Caco-2 (cell line): ENCODE measurements at regions of chr20 and their contacts with region 1.

Region 1: DNA sequence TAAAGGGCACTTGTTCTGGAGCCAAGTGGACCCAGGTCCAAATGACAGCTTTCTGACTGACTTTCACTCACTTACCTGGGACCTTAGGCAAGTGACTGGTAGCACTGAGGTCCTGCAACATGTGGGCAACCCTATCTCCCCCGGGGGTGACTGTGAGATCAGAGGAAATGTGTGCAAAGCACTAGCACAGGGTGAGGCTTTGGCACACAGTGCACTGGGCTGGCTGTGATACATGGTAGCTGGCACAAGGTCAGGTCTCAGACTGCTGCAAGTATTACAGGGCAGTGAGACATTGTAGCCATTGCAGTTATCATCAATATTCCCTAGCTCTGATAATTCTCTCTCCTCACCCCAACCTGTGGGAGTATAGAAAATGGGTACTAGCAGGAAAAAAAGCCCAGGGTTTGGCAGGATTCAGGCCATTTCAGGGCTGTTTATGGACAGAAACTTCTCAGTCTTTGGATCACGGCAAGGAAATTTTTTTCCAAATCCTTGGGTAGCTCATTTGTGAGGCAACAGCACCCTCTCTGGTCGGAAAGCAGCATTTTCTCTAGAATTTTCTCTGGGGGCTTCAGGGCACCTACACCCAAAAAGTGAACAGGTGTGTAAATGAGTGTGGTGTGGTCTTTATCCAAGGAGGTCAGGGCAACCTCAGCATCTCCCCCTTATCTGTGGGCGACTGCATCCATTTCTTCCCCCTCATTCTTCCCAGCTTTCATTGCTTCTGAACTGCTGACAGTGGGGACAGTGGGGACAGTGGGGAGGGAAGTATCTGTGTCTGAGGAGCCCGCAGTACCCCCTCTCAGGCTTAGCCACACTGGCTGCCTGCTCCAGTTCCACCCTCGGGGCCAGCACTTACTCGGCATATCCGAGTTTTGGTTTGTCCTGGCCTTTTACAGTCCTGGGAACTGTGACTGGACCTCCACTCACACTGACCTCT is 148.7 kb upstream of the PHACTR3 start:
- DNase-seq: peak in 1 of 2 experiments; percentile 52
- H3K4me3 ChIP-seq: no peak overlapping the region
- H3K4me3 Mint-ChIP-seq: no peak overlapping the region
- H3K27ac Mint-ChIP-seq: no peak overlapping the region
- H3K4me1 ChIP-seq: peaks cover 10% of the 10 kb centered on the region; the same call in 1 of the 2 replicates
- H3K4me1 Mint-ChIP-seq: no peaks in the 10 kb centered on the region
- H3K27me3 ChIP-seq: no peaks in the 10 kb centered on the region
- H3K27me3 Mint-ChIP-seq: peaks cover 17% of the 10 kb centered on the region
- CTCF ChIP-seq: peak; percentile 86 to 91

Region 2: DNA sequence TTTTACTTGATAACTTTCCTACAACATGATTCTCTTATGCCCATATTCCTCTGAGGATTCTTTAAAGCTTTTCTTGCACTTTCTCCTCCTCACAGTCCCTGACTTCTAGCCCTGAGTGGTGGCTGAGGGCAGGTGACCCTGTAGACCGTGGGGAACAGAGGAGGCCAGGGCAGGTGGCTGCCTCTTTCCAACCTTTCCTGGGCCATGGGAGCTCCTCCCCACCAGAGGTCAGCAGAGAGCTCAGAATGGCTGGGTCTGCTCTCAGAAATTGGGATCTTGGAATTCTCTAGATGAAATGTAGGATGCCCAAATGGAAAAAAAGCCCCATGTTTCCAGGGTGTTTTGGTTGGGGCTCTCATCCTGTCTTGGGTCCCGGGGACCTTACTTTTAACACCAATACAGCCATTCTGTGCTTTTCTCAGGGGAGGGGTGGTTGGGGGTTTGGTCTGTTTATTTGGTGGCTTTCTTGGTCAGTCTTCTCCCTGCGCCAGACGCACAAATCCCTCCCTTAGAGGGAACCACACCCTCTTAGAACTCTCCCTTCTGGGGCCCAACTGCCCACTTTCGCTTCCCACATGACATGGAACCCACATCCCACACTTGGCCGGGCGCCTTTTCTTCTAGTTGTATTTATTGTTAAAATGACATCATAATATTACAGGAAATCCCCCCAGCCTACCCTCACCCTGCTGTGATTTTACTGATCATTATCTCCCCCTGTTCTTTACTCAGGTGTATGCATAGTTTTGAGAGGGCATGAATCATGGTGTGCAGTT is 585.2 kb before region 1 on chr20:
- CTCF ChIA-PET with region 1: interaction called, 29 read pairs
- POLR2A ChIA-PET with region 1: no interaction called
- intact Hi-C with region 1: loop called (anchors 1 kb)
- DNase-seq: peak; percentile 83 to 93
- H3K4me3 ChIP-seq: no peak overlapping the region
- H3K4me3 Mint-ChIP-seq: no peak overlapping the region
- H3K27ac Mint-ChIP-seq: no peak overlapping the region
- H3K4me1 ChIP-seq: no peaks in the 10 kb centered on the region
- H3K4me1 Mint-ChIP-seq: peaks cover 6% of the 10 kb centered on the region
- H3K27me3 ChIP-seq: no peaks in the 10 kb centered on the region
- H3K27me3 Mint-ChIP-seq: peaks cover 17% of the 10 kb centered on the region
- CTCF ChIP-seq: peak; percentile 98 to 100

Region 3: DNA sequence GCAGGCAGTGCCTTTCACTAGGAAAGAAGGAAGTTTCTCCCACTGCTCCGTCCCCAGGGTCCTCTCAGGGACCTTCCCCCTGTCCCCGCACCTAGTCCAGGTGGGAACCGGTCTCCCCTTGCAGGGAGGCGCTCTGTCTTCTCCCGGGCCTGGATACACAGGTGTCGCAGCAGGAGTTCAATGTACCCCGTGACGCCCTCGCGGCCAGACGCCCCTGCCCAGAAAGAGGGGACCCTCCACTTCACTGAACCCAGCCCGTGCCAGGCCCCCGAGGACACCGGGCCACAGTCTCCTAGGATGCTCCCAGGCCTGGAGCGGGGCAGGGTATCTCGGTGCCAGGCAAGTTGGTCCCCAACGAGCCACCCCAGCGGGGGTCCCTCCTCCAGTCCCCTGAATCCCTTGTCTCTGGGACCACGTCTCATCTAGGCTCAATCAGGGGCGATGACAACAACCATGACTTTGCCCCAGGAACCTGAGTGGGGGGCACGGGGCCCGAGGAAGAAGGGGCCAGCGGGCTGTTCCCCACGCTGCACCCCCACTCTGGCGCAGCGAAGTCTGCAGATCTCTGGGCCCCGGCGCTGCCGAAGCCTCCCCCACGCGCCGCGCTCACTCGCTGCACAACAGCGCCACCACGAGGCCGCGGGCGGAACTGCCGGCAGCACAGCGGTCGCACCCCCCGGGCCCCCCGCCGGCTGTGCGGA is 52.3 kb before region 1 on chr20:
- CTCF ChIA-PET with region 1: interaction called, 14 read pairs
- POLR2A ChIA-PET with region 1: no interaction called
- intact Hi-C with region 1: no loop called
- DNase-seq: peak in 1 of 2 experiments; percentile 92
- H3K4me3 ChIP-seq: no peak overlapping the region; the same call in 1 of the 2 replicates
- H3K4me3 Mint-ChIP-seq: peak overlapping the region; percentile 13
- H3K27ac Mint-ChIP-seq: no peak overlapping the region
- H3K4me1 ChIP-seq: peaks cover 20% of the 10 kb centered on the region
- H3K4me1 Mint-ChIP-seq: no peaks in the 10 kb centered on the region
- H3K27me3 ChIP-seq: no peaks in the 10 kb centered on the region; the same call in 1 of the 2 replicates
- H3K27me3 Mint-ChIP-seq: peaks cover 19% of the 10 kb centered on the region
- CTCF ChIP-seq: peak; percentile 99 to 100

Region 4: GRCh38 chr20:59439243-59439642 is 16.4 kb before region 1 on chr20:
- CTCF ChIA-PET with region 1: interaction called, 16 read pairs
- POLR2A ChIA-PET with region 1: no interaction called
- intact Hi-C with region 1: loop called (anchors 1 kb)
- DNase-seq: peak in 1 of 2 experiments; percentile 58
- H3K4me3 ChIP-seq: no peak overlapping the region
- H3K4me3 Mint-ChIP-seq: no peak overlapping the region
- H3K27ac Mint-ChIP-seq: no peak overlapping the region
- H3K4me1 ChIP-seq: peaks cover 7% of the 10 kb centered on the region; the same call in 1 of the 2 replicates
- H3K4me1 Mint-ChIP-seq: no peaks in the 10 kb centered on the region
- H3K27me3 ChIP-seq: peaks cover 2% of the 10 kb centered on the region; the same call in 1 of the 2 replicates
- H3K27me3 Mint-ChIP-seq: peaks cover 29% of the 10 kb centered on the region
- CTCF ChIP-seq: peak; percentile 41 to 69

Region 5: DNA sequence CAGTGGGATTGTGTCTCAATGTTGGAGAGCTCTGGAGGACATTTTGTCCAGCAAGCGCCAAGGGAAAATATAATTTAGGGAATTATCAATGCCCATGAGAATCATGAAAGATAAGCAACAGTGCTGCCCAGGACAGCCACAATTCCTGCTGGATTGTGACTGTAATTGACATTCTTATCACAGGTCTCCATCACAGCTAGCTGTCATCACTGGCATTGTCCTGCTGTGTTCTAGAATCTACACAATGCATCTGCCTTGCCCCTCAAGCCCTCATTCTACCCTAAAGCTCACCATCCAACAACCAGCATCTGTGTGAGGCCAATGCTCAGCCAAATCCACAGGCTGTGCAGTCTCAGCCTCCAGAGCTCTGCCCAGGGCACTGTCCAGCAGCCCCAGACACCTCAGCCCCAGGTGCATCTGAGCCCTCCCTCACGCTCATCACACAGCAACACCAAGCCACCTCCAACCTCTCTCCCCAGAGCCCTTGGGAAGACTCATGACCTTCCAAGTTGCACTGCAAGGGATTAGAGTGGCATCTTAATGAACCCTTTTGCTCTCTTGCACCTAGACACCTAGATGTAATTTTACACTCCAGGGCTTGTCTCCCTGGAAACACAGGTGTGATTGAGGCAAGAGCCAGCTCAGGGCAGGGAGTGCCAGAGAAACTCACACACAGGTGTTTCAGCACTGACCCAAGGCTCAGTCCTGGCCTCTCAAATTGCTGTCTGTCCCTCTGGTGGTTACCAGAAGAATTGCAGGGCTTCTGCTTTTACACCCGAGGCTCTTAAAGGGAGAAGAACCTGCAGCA is 63.4 kb after region 1 on chr20:
- CTCF ChIA-PET with region 1: no interaction called
- POLR2A ChIA-PET with region 1: no interaction called
- intact Hi-C with region 1: no loop called
- DNase-seq: peak; percentile 81
- H3K4me3 ChIP-seq: no peak overlapping the region
- H3K4me3 Mint-ChIP-seq: no peak overlapping the region
- H3K27ac Mint-ChIP-seq: no peak overlapping the region
- H3K4me1 ChIP-seq: no peaks in the 10 kb centered on the region
- H3K4me1 Mint-ChIP-seq: no peaks in the 10 kb centered on the region
- H3K27me3 ChIP-seq: no peaks in the 10 kb centered on the region; the same call in 1 of the 2 replicates
- H3K27me3 Mint-ChIP-seq: peaks cover 57% of the 10 kb centered on the region
- CTCF ChIP-seq: peak; percentile 98 to 99

Region 6: GRCh38 chr20:59966428-59966827 is 510.8 kb after region 1 on chr20:
- CTCF ChIA-PET with region 1: no interaction called
- POLR2A ChIA-PET with region 1: no interaction called
- intact Hi-C with region 1: no loop called
- DNase-seq: no peak
- H3K4me3 ChIP-seq: no peak overlapping the region
- H3K4me3 Mint-ChIP-seq: no peak overlapping the region
- H3K27ac Mint-ChIP-seq: no peak overlapping the region
- H3K4me1 ChIP-seq: no peaks in the 10 kb centered on the region
- H3K4me1 Mint-ChIP-seq: no peaks in the 10 kb centered on the region
- H3K27me3 ChIP-seq: no peaks in the 10 kb centered on the region
- H3K27me3 Mint-ChIP-seq: peaks cover 3% of the 10 kb centered on the region
- CTCF ChIP-seq: no peak